Activated CD4-positive, alpha-beta T cell treated with anti-CD3 and anti-CD28 coated beads for 36 hours (primary cell): ENCODE measurements at regions of chr2 and their contacts with region 1.

Region 1: GRCh38 chr2:118046634-118047210 is 32.9 kb upstream of the CCDC93 start:
- DNase-seq: no peak
- ATAC-seq: no peak
- H3K4me3 Mint-ChIP-seq: no peak overlapping the region
- H3K27ac Mint-ChIP-seq: no peak overlapping the region
- H3K4me1 Mint-ChIP-seq: peaks cover 2% of the 10 kb centered on the region
- H3K27me3 Mint-ChIP-seq: peaks cover 46% of the 10 kb centered on the region

Region 2: GRCh38 chr2:117820444-117820843 is 226.3 kb before region 1 on chr2:
- CTCF ChIA-PET with region 1: no interaction called
- POLR2A ChIA-PET with region 1: no interaction called
- intact Hi-C with region 1: no loop called
- DNase-seq: peak; percentile 64
- ATAC-seq: peak; percentile 98
- H3K4me3 Mint-ChIP-seq: no peak overlapping the region
- H3K27ac Mint-ChIP-seq: peak overlapping the region; percentile 86
- H3K4me1 Mint-ChIP-seq: peaks cover 55% of the 10 kb centered on the region
- H3K27me3 Mint-ChIP-seq: no peaks in the 10 kb centered on the region

Region 3: GRCh38 chr2:118032169-118033013 is 14.3 kb before region 1 on chr2:
- CTCF ChIA-PET with region 1: interaction called, 14 read pairs
- POLR2A ChIA-PET with region 1: no interaction called
- intact Hi-C with region 1: no loop called
- DNase-seq: peak; percentile 65
- ATAC-seq: peak; percentile 83
- H3K4me3 Mint-ChIP-seq: no peak overlapping the region
- H3K27ac Mint-ChIP-seq: no peak overlapping the region
- H3K4me1 Mint-ChIP-seq: no peaks in the 10 kb centered on the region
- H3K27me3 Mint-ChIP-seq: peaks cover 34% of the 10 kb centered on the region

Region 4: GRCh38 chr2:118061135-118061955 is 14.6 kb after region 1 on chr2:
- CTCF ChIA-PET with region 1: interaction called, 14 read pairs
- POLR2A ChIA-PET with region 1: no interaction called
- intact Hi-C with region 1: no loop called
- DNase-seq: no peak
- ATAC-seq: no peak
- H3K4me3 Mint-ChIP-seq: no peak overlapping the region
- H3K27ac Mint-ChIP-seq: no peak overlapping the region
- H3K4me1 Mint-ChIP-seq: peaks cover 10% of the 10 kb centered on the region
- H3K27me3 Mint-ChIP-seq: peaks cover 22% of the 10 kb centered on the region

Region 5: GRCh38 chr2:118148809-118149208 is 102.1 kb after region 1 on chr2:
- CTCF ChIA-PET with region 1: interaction called, 7 read pairs
- POLR2A ChIA-PET with region 1: no interaction called
- intact Hi-C with region 1: loop called (anchors 1 kb)
- DNase-seq: no peak
- ATAC-seq: no peak
- H3K4me3 Mint-ChIP-seq: no peak overlapping the region
- H3K27ac Mint-ChIP-seq: no peak overlapping the region
- H3K4me1 Mint-ChIP-seq: peaks cover 6% of the 10 kb centered on the region
- H3K27me3 Mint-ChIP-seq: peaks cover 11% of the 10 kb centered on the region

Region 6: GRCh38 chr2:118186110-118186857 is 139.6 kb after region 1 on chr2:
- CTCF ChIA-PET with region 1: interaction called, 6 read pairs
- POLR2A ChIA-PET with region 1: no interaction called
- intact Hi-C with region 1: loop called in 1 of 2 experiments (anchors 5 kb)
- DNase-seq: peak; percentile 94
- ATAC-seq: peak; percentile 91
- H3K4me3 Mint-ChIP-seq: peak overlapping the region; percentile 87
- H3K27ac Mint-ChIP-seq: peak overlapping the region; percentile 98
- H3K4me1 Mint-ChIP-seq: peaks cover 14% of the 10 kb centered on the region
- H3K27me3 Mint-ChIP-seq: no peaks in the 10 kb centered on the region

Region 7: GRCh38 chr2:118202707-118203303 is 156.1 kb after region 1 on chr2:
- CTCF ChIA-PET with region 1: interaction called, 6 read pairs
- POLR2A ChIA-PET with region 1: no interaction called
- intact Hi-C with region 1: loop called in 1 of 2 experiments (anchors 2 kb)
- DNase-seq: peak; percentile 75
- ATAC-seq: peak; percentile 96
- H3K4me3 Mint-ChIP-seq: no peak overlapping the region
- H3K27ac Mint-ChIP-seq: no peak overlapping the region
- H3K4me1 Mint-ChIP-seq: peaks cover 4% of the 10 kb centered on the region
- H3K27me3 Mint-ChIP-seq: peaks cover 13% of the 10 kb centered on the region

Region 8: GRCh38 chr2:118312969-118313756 is 266.4 kb after region 1 on chr2:
- CTCF ChIA-PET with region 1: no interaction called
- POLR2A ChIA-PET with region 1: no interaction called
- intact Hi-C with region 1: no loop called
- DNase-seq: peak; percentile 19
- ATAC-seq: no peak
- H3K4me3 Mint-ChIP-seq: no peak overlapping the region
- H3K27ac Mint-ChIP-seq: no peak overlapping the region
- H3K4me1 Mint-ChIP-seq: peaks cover 7% of the 10 kb centered on the region
- H3K27me3 Mint-ChIP-seq: no peaks in the 10 kb centered on the region

Region 9: GRCh38 chr2:118386641-118387302 is 340.1 kb after region 1 on chr2:
- CTCF ChIA-PET with region 1: no interaction called
- POLR2A ChIA-PET with region 1: no interaction called
- intact Hi-C with region 1: loop called in 1 of 2 experiments (anchors 10 kb)
- DNase-seq: no peak
- ATAC-seq: no peak
- H3K4me3 Mint-ChIP-seq: no peak overlapping the region
- H3K27ac Mint-ChIP-seq: no peak overlapping the region
- H3K4me1 Mint-ChIP-seq: no peaks in the 10 kb centered on the region
- H3K27me3 Mint-ChIP-seq: peaks cover 5% of the 10 kb centered on the region